ENCODE measurements at regions of chr5 and their contacts with region 1.

Region 1: DNA sequence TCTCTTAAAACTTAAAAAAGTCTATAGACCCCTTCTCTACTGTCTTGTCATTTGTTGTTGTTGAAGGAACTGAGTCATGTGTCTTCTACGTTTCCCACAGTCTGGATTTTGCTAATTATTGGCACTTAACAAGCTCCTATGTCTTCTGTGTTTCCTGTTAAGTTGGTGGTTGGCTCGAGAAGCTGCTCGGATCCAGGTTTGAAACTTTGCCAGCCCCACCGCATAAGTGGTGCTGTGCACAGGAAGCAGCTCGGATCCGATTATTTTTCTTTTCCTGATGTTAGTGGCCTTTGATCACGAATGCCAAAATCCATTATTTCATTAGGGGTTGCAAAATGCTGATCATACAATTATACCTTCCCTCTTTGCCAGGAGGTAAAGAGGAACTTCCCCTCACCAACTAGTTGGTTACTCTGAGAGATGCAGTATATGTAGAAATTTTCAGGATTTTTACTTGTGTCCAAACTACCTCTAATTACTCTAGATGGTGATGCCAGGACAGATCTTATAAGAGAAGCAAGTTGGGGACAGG is 186.5 kb downstream of the NSG2 start:
- DNase-seq: no peak
- ATAC-seq: no peak
- H3K4me3 ChIP-seq: no peak overlapping the region
- H3K27ac ChIP-seq: no peak overlapping the region
- H3K4me1 ChIP-seq: no peaks in the 10 kb centered on the region
- H3K27me3 ChIP-seq: no peaks in the 10 kb centered on the region
- CTCF ChIP-seq: no peak
- POLR2A ChIP-seq: no peak
- RAD21 ChIP-seq: no peak

Region 2: GRCh38 chr5:173764321-173765029 is 467.5 kb before region 1 on chr5:
- CTCF ChIA-PET with region 1: no interaction called
- POLR2A ChIA-PET with region 1: no interaction called
- dilution Hi-C with region 1: no loop called
- in situ Hi-C with region 1: no loop called
- intact Hi-C with region 1: no loop called
- DNase-seq: peak; percentile 96
- ATAC-seq: peak; percentile 99
- H3K4me3 ChIP-seq: no peak overlapping the region
- H3K27ac ChIP-seq: peak overlapping the region; percentile 59
- H3K4me1 ChIP-seq: peaks cover 7% of the 10 kb centered on the region
- H3K27me3 ChIP-seq: no peaks in the 10 kb centered on the region; the same call in 1 of the 2 replicates
- CTCF ChIP-seq: no peak
- POLR2A ChIP-seq: no peak
- RAD21 ChIP-seq: peak; percentile 11; the same call in 1 of the 2 replicates

Region 3: DNA sequence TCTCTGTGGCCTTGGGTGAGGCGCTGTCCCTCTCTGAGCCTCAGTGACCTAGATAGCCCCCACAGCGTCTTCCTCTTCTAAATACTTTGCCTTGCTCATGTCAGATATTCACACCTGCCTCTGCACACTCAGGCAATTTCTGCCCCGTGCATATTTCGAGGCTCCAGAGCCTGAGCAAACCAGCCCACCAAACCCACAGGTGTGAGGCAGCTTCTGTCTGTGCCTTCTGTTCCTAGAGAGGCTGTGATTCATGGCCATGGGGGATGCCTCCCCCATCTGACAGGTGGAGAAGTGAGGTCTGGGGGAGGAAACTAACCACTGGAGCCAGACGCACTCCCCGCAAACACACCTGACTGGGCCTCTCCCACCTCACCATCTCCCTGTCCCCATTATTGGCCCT is 1596.6 kb after region 1 on chr5:
- CTCF ChIA-PET with region 1: interaction called, 13 read pairs
- POLR2A ChIA-PET with region 1: no interaction called
- dilution Hi-C with region 1: no loop called
- in situ Hi-C with region 1: no loop called
- intact Hi-C with region 1: no loop called
- DNase-seq: no peak
- ATAC-seq: no peak
- H3K4me3 ChIP-seq: no peak overlapping the region
- H3K27ac ChIP-seq: no peak overlapping the region
- H3K4me1 ChIP-seq: no peaks in the 10 kb centered on the region
- H3K27me3 ChIP-seq: peaks cover 2% of the 10 kb centered on the region
- CTCF ChIP-seq: no peak
- POLR2A ChIP-seq: no peak
- RAD21 ChIP-seq: no peak

Measured in IMR-90 (cell line).